ENCODE measurements at regions of chr14 and their contacts with region 1.

Region 1: GRCh38 chr14:73438993-73439392 is 19.4 kb downstream of the NUMB start:
- DNase-seq: no peak
- ATAC-seq: no peak

Region 2: DNA sequence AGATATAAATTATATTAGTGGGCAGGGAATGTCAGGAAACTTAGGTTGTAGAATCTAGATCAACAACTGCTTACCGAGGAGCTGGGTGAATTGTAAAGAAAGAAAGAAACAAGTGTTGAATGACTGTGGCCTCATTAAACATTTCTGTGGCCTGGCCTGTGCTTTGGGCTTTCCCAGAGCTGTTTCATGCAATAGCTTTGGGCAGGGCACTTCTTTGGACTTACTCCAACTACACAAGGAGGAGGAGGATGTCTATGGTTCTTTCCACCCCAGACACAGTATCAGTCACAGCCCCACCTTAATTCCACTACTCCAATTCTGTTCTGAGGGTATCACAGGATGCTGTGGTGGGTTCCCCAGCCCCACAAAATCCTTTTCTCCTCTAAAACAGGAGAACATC is 583.1 kb before region 1 on chr14:
- intact Hi-C with region 1: no loop called
- DNase-seq: no peak
- ATAC-seq: peak; percentile 45

Region 3: DNA sequence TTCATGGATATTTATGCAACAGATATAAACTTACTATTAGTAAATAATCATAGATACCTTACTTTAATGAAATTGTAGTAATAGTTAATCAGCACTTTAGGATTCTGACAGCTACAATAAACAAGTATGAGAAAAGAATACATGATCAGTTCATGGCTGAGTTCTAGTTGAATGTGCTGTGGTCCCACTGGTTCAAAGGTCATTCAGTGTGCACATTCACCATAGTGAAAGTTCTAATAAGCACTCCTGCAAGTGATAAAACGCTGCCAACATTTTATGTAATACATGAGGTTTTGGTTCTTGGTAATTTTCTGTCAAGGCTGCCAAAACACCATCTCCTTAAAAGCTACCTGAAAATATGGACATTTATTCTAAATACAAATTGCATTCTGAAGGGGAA is 73.3 kb before region 1 on chr14:
- intact Hi-C with region 1: loop called (anchors 10 kb)
- DNase-seq: no peak
- ATAC-seq: no peak

Region 4: GRCh38 chr14:73685328-73685727 is 246.3 kb after region 1 on chr14:
- intact Hi-C with region 1: no loop called
- DNase-seq: no peak
- ATAC-seq: no peak

Region 5: DNA sequence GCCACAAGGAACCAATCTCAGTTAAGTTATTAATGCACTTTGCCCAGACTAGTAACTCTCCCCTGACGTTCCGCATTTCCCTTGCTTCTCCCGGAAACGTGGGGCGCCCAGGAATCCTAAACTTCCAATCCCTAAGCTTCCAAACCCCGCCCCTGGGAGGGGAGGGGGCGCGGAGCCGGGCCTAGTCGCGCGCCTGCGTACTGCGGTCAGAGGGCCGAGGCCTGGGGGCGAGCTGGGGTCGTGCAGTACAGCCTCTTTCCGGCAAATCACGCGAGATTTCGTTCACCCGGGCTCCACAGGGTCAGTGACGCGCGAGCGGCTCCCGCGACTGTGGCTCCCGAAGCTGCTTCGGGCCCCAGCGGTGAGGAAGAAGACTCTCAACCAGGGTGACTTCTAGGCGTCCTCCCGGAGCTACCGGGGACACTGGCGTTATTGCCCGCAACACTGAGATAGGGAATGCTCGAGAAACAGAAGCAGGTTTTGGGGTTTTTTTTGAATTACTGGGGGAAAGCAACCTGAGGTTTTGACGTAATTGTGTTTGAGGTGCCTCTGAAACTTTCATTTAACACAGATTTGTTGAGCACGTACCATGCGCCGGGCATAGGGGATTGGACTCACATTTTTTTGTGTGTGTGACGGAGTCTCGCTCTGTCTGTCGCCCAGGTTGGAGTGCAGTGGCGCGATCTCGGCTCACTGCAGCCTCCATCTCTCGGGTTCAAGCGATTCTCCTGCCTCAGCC is 412.8 kb after region 1 on chr14 and contains the start of gene PTGR2:
- intact Hi-C with region 1: no loop called
- DNase-seq: peak; percentile 97
- ATAC-seq: peak; percentile 98
- total RNA-seq, gene PTGR2: 35.7 TPM